CD4-positive, alpha-beta memory T cell (primary cell): ENCODE measurements at regions of chr18 and their contacts with region 1.

Region 1: GRCh38 chr18:70454704-70455322 is 166.0 kb downstream of the SOCS6 start:
- DNase-seq: peak in 4 of 5 donors; percentile 20 to 39 (median 30)
- H3K4me3 ChIP-seq: no peak overlapping the region
- H3K4me3 Mint-ChIP-seq: no peak overlapping the region
- H3K27ac ChIP-seq: no peak overlapping the region
- H3K27ac Mint-ChIP-seq: no peak overlapping the region
- H3K4me1 ChIP-seq: no peaks in the 10 kb centered on the region
- H3K4me1 Mint-ChIP-seq: no peaks in the 10 kb centered on the region
- H3K27me3 ChIP-seq: no peaks in the 10 kb centered on the region
- H3K27me3 Mint-ChIP-seq: peaks cover 1 to 14% of the 10 kb centered on the region in 2 donors

Region 2: GRCh38 chr18:68847219-68847837 is 1607.5 kb before region 1 on chr18:
- CTCF ChIA-PET with region 1: no interaction called
- POLR2A ChIA-PET with region 1: no interaction called
- intact Hi-C with region 1: loop called (anchors 1 kb)
- DNase-seq: peak in 2 of 5 donors; percentile 4 to 14
- H3K4me3 ChIP-seq: no peak overlapping the region
- H3K4me3 Mint-ChIP-seq: no peak overlapping the region
- H3K27ac ChIP-seq: no peak overlapping the region
- H3K27ac Mint-ChIP-seq: no peak overlapping the region
- H3K4me1 ChIP-seq: no peaks in the 10 kb centered on the region
- H3K4me1 Mint-ChIP-seq: no peaks in the 10 kb centered on the region
- H3K27me3 ChIP-seq: no peaks in the 10 kb centered on the region
- H3K27me3 Mint-ChIP-seq: no peaks in the 10 kb centered on the region

Region 3: GRCh38 chr18:70397259-70397925 is 57.4 kb before region 1 on chr18:
- CTCF ChIA-PET with region 1: no interaction called
- POLR2A ChIA-PET with region 1: no interaction called
- intact Hi-C with region 1: no loop called
- DNase-seq: no peak
- H3K4me3 ChIP-seq: no peak overlapping the region
- H3K4me3 Mint-ChIP-seq: no peak overlapping the region
- H3K27ac ChIP-seq: no peak overlapping the region
- H3K27ac Mint-ChIP-seq: no peak overlapping the region
- H3K4me1 ChIP-seq: no peaks in the 10 kb centered on the region
- H3K4me1 Mint-ChIP-seq: no peaks in the 10 kb centered on the region
- H3K27me3 ChIP-seq: no peaks in the 10 kb centered on the region
- H3K27me3 Mint-ChIP-seq: peaks cover 1 to 2% of the 10 kb centered on the region in 2 donors

Region 4: DNA sequence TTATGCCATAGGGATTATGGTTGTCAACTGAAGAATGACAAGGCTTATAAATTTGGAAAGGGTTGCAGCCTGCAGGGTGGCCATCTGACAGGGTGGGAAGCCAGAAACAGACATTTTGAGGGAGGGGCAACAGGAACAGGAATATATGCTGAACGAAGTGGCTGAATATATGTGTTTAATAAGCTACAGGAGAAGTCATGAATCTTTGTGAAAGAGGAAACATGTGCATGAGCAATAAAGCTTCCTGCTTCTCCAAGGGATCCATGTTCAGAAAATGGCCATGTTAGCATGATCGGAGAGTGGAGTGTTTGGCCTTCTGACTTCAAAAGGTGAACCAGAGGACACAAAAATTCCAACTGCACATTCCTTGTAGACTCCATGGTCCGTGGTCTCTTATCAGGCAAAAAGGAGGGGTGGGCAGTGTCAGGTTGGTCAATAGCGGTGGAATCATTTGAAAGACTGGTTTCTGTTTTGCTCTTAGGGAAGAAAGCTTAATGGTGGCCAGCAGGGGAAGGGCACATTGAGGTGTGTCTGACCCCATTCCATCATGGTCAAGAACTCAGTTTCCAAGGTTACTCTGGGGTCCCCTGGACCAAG is 21.9 kb before region 1 on chr18:
- CTCF ChIA-PET with region 1: interaction called, 15 read pairs
- POLR2A ChIA-PET with region 1: no interaction called
- intact Hi-C with region 1: no loop called
- DNase-seq: no peak
- H3K4me3 ChIP-seq: no peak overlapping the region
- H3K4me3 Mint-ChIP-seq: no peak overlapping the region
- H3K27ac ChIP-seq: no peak overlapping the region
- H3K27ac Mint-ChIP-seq: no peak overlapping the region
- H3K4me1 ChIP-seq: no peaks in the 10 kb centered on the region
- H3K4me1 Mint-ChIP-seq: no peaks in the 10 kb centered on the region
- H3K27me3 ChIP-seq: no peaks in the 10 kb centered on the region
- H3K27me3 Mint-ChIP-seq: no peaks in the 10 kb centered on the region